Dorsolateral prefrontal cortex (tissue), 120 donors: ENCODE measurements at regions of chr18 and their contacts with region 1.

Region 1: GRCh38 chr18:3782901-3783300 is 332.9 kb downstream of the TGIF1 start:
- DNase-seq: no peak
- H3K4me3 ChIP-seq: no peak overlapping the region
- H3K27ac ChIP-seq: peak overlapping the region in 6 of 59 donors; percentile 1 to 47 (median 14)
- H3K27me3 ChIP-seq: no peaks in the 10 kb centered on the region
- CTCF ChIP-seq: no peak

Region 2: DNA sequence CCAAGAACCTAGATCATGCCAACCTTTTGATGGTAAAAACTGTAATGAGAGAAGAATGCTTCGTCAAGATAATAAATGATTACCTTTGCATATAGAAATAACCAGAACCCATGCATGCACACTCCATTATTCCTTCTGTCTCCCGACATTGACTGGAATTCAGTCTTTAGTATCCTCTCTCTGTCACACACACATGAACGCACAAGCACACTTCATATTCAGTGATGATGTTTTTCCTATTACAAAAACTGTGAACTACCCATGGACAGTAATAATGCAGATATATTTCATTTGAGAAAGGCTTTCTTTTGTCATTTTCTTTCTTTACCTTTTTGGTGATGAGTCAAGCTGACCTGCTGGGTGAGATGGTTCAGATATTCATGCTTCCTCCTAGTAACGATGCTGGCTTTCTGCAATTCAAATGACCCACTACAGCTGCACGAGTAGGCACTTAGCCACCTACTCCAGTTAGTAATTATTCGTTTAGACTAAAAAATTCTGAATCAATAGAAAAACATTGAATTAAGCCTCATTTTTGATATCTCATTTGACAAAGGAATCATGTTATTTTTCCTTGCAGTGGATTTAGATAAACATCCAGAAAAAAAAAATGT is 49.2 kb after region 1 on chr18:
- intact Hi-C with region 1: loop called in 1 of 2 experiments (anchors 5 kb)
- DNase-seq: no peak
- H3K4me3 ChIP-seq: no peak overlapping the region
- H3K27ac ChIP-seq: peak overlapping the region in 17 of 59 donors; percentile 2 to 59 (median 15)
- H3K27me3 ChIP-seq: peaks cover 0 to 5% (median 0%) of the 10 kb centered on the region in 45 donors
- CTCF ChIP-seq: no peak